Right ventricle myocardium inferior (tissue), 1 donor: ENCODE measurements at regions of chr20 and their contacts with region 1.

Region 1: GRCh38 chr20:25539742-25540672 is 45.3 kb downstream of the NINL start:
- DNase-seq: no peak
- ATAC-seq: peak; percentile 62

Region 2: DNA sequence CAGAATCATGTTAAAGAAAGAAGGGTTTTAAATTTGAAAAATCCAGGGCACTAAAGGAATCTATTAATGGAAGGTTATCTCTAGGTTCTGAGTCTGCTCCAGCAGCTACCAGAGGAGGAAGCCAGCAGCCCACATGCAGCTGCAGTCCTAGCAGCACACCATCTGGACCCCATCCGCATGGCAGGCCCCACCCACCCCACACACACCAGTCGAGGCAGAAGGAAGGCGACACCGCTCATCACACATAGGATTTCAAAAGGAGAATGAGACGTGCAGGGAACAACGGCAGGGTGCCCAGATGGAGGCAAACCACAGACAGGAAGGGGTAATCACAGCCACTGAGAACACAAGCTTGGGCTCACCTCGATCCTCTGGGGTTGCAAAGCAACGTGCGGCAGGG is 53.6 kb before region 1 on chr20:
- intact Hi-C with region 1: loop called (anchors 10 kb)
- DNase-seq: peak; percentile 71
- ATAC-seq: peak; percentile 69

Region 3: GRCh38 chr20:25623736-25624499 is 83.9 kb after region 1 on chr20 and contains the start of gene NANP:
- intact Hi-C with region 1: loop called (anchors 5 kb)
- DNase-seq: peak; percentile 97
- ATAC-seq: peak; percentile 97
- total RNA-seq, gene NANP: 3.8 TPM

Region 4: DNA sequence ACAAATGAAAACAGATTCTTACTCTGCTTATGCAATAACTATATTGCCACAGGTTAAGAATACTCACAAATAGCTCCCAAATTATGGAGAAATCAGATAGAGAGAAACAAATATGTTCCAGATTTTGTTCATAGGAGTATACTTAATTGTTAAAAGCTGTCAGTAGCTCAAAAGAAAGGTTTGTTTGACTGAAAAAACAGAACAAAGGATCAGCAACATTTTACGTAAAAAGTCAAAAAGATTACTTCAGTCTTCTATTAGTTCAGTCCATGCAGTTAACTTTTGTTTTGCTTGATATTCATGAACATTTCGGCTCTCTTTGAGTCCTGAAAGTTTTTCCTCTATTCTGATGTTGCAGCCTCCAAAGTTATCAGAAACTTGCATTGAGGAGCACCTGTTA is 97.2 kb after region 1 on chr20:
- intact Hi-C with region 1: no loop called
- DNase-seq: no peak
- ATAC-seq: no peak